Activated CD4-positive, alpha-beta memory T cell treated with anti-CD3 and anti-CD28 coated beads for 36 hours (primary cell): ENCODE measurements at regions of chr4 and their contacts with region 1.

Region 1: DNA sequence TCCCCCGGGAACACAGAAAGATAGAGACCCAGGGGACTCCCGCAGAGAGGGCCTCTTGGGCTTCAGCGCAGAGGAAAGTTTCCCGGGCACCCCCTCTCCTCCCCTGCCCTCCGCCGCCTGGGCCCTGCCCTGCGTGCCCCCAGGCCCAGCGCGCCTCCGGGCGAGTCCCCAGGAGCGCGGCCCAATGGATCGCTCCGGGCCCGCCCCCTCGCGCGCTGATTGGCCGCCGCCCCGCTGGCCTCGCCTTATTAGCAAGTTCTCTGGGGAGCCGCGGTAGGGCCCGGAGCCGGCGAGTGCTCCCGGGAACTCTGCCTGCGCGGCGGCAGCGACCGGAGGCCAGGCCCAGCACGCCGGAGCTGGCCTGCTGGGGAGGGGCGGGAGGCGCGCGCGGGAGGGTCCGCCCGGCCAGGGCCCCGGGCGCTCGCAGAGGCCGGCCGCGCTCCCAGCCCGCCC is at the start of gene MSX1:
- DNase-seq: peak; percentile 65
- H3K4me3 Mint-ChIP-seq: peak within 1 kb of the TSS; percentile 60
- H3K27ac Mint-ChIP-seq: no peak within 1 kb of the TSS
- H3K4me1 Mint-ChIP-seq: peaks cover 38% of the 10 kb centered on the region
- H3K27me3 Mint-ChIP-seq: peaks cover 76% of the 10 kb centered on the region
- total RNA-seq, gene MSX1: 0.12 TPM in 1 of 2 experiments, not detected in the other

Region 2: DNA sequence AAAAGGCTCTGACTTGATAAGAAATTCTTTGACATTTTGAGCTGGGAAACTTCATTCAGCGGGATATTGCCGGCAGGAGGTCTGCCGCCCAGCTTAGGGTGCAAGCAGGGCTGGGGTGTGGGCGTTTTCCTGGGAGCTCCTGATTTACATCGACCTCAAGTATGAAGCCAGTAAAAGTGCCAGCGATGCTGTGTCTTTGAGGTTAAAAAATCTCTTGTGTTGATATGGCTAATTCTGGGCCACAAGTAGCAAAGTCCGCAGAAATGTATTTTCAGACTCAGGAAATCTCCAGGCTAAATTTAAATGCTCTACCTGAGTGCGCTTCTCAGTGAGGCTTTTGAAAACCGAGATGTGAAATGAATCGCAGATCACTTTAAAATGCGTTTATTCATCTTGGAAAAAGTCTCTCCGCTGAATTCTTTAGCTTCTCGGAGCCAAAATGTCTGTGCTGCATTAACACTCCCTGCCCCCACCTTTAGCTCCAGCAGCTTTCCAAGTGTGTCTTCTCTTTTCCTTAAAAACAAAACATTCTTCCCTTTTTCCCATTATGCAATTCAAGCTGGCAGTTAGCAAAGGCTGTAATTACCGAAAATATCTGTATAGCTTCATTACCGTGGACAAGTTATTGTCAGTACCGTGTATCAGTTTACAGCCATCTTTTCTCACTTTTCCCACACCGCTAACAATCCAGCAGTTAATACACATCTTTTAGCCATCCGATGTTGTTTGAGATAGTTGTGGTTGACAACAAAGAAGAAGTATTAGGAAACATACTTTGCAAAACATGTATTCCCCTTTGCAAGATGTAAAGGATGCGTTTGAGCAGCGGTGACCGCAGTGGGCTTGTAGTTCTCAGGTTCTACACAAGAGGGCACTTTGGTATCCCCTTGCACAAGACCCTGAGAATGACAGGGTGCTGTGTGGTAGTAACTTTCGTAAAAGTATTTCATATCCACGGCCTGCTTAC is 181.6 kb before region 1 on chr4:
- CTCF ChIA-PET with region 1: no interaction called
- POLR2A ChIA-PET with region 1: no interaction called
- intact Hi-C with region 1: loop called (anchors 5 kb)
- DNase-seq: no peak
- H3K4me3 Mint-ChIP-seq: no peak overlapping the region
- H3K27ac Mint-ChIP-seq: no peak overlapping the region
- H3K4me1 Mint-ChIP-seq: no peaks in the 10 kb centered on the region
- H3K27me3 Mint-ChIP-seq: no peaks in the 10 kb centered on the region

Region 3: DNA sequence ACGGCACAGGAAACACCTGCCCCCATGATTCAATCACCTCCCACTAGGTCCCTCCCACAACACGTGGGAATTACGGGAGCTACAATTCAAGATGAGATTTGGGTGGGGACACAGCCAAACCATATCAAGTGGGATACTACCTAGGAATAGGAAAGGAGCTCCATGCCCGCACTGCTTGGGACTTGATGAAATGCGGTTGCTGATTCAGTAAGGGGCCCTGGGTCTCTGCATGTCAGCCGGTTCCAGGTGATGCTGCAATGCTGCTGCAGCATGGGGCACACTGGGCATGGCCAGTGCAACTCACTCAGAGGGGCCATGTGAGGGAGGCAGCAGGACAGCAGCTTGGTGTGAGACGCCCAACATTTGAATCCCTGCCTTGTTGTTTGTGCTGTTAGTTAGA is 34.0 kb before region 1 on chr4:
- CTCF ChIA-PET with region 1: no interaction called
- POLR2A ChIA-PET with region 1: no interaction called
- intact Hi-C with region 1: no loop called
- DNase-seq: no peak
- H3K4me3 Mint-ChIP-seq: no peak overlapping the region
- H3K27ac Mint-ChIP-seq: no peak overlapping the region
- H3K4me1 Mint-ChIP-seq: no peaks in the 10 kb centered on the region
- H3K27me3 Mint-ChIP-seq: peaks cover 4% of the 10 kb centered on the region

Region 4: GRCh38 chr4:5267408-5267807 is 408.0 kb after region 1 on chr4:
- CTCF ChIA-PET with region 1: no interaction called
- POLR2A ChIA-PET with region 1: no interaction called
- intact Hi-C with region 1: no loop called
- DNase-seq: no peak
- H3K4me3 Mint-ChIP-seq: no peak overlapping the region
- H3K27ac Mint-ChIP-seq: no peak overlapping the region
- H3K4me1 Mint-ChIP-seq: no peaks in the 10 kb centered on the region
- H3K27me3 Mint-ChIP-seq: no peaks in the 10 kb centered on the region

Region 5: DNA sequence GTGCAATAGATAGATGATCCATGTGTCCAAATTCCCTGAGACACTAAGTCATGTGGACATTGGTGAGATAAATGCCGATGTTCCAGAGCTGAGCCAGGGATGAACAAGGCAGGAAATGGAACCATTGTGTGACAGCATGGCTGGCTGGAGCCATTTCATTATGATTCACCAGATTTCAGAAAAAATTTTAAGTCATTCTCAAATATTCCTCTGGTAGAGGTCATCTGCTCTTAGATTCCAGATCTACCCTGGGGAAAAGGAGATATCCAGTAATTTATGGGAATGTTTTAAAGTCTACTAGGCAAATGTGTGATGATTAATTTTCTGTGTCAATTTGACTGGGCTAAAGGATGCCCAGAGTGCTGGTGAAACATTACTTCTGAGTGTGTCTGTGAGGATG is 479.1 kb after region 1 on chr4:
- CTCF ChIA-PET with region 1: no interaction called
- POLR2A ChIA-PET with region 1: no interaction called
- intact Hi-C with region 1: no loop called
- DNase-seq: no peak
- H3K4me3 Mint-ChIP-seq: no peak overlapping the region
- H3K27ac Mint-ChIP-seq: no peak overlapping the region
- H3K4me1 Mint-ChIP-seq: no peaks in the 10 kb centered on the region
- H3K27me3 Mint-ChIP-seq: no peaks in the 10 kb centered on the region